ENCODE measurements at regions of chr3 and their contacts with region 1.

Region 1: DNA sequence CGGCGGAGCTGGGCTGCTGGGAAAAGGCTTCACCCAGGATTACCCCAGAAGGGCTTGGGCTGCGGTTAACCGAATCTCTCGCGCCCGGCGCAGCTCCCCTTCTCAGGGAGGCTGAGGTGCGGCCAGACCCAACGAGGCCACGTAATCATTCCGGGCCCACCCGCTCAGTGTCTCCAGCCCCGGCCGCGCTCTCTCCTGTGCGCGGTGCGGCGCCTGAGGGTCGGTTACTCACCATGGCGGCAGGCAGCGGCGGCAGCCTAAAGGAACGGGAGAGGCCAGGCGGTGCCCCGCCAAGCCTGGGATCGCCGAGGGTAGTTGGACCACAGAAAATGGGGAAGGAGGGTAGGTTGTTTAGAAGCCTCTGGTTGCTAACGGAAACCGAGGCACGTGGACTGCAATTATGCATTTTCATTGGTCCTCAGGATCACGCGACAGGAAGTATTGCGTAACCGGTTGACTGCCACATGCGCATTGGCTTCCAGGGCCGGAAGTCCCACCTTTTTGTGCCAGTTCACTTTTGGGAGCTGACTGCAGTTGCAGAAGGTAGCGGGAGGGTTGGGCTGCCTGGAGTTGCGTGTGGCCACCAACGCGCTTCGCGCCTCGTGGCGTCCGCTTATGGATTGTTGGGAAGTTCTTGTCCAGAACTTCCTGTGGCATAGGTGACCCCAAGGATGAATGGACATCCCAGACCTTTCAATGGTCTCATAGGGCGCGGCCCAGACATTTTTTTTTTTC is at the start of gene LZTFL1:
- DNase-seq: peak; percentile 96
- H3K4me3 ChIP-seq: peak within 1 kb of the TSS; percentile 67 to 78 (median 77)
- H3K27ac ChIP-seq: peak within 1 kb of the TSS; percentile 68
- H3K4me1 ChIP-seq: peaks cover 7% of the 10 kb centered on the region
- H3K27me3 ChIP-seq: no peaks in the 10 kb centered on the region
- CTCF ChIP-seq: no peak
- total RNA-seq, gene LZTFL1: 13.1 to 13.7 TPM

Region 2: GRCh38 chr3:45760878-45761711 is 80.8 kb before region 1 on chr3:
- CTCF ChIA-PET with region 1: no interaction called
- dilution Hi-C with region 1: no loop called
- in situ Hi-C with region 1: loop called (anchors 5 to 10 kb)
- intact Hi-C with region 1: no loop called
- DNase-seq: peak; percentile 26
- H3K4me3 ChIP-seq: no peak overlapping the region
- H3K27ac ChIP-seq: no peak overlapping the region
- H3K4me1 ChIP-seq: no peaks in the 10 kb centered on the region
- H3K27me3 ChIP-seq: no peaks in the 10 kb centered on the region
- CTCF ChIP-seq: peak; percentile 81 to 90

Region 3: DNA sequence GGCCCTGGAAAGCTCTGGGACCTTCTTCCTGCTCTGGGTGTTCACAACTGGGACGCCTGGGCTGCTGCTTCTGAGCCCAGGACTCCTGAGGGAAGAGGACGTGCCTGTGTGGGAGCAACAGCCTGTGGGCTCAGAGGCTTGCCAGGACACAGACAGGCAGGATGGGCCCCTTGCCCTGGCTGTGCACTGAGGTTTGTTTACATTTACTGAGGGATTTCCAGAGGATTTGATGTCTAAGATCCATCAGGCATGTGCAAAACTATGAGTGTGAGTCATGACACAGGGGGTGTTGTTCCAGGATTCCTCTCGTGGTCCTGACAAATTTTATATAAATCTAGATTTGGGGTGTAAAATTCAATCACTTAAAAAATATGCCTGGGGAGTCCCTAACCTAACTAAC is 55.0 kb after region 1 on chr3:
- CTCF ChIA-PET with region 1: no interaction called
- dilution Hi-C with region 1: no loop called
- in situ Hi-C with region 1: no loop called
- intact Hi-C with region 1: loop called (anchors 5 kb)
- DNase-seq: peak; percentile 57
- H3K4me3 ChIP-seq: no peak overlapping the region
- H3K27ac ChIP-seq: no peak overlapping the region
- H3K4me1 ChIP-seq: peaks cover 25% of the 10 kb centered on the region
- H3K27me3 ChIP-seq: no peaks in the 10 kb centered on the region
- CTCF ChIP-seq: no peak

Region 4: DNA sequence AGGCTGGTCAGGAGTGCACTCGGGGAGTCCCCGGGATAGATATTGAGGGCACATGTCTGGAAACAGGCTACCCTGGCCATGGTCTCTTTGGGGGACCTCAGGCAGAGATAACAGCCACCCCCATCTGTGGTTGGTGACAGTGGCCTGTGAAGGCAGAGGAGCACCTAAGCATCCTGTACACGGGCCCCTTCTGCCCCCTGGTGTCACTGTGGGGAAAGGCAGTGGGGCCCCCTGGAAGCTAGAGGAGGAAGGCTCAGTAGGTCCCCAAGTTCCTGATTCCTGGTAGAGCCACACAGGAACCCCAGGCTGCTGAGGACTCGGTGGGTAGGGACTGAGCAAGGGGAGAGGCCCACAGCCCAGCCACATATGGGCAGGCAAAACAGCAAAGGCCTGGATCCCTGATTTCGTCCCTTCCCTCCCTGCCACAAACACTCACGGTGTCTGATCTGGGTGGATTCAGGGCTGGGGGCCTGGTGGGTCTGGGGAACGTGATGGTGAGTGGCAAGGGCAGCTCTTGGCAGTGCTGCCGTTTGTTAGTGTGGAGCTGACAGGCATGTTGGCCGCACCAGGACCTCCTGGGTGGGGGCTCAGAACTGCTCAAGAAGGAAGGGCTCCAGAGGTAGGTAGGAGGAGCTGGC is 87.2 kb after region 1 on chr3:
- CTCF ChIA-PET with region 1: no interaction called
- dilution Hi-C with region 1: no loop called
- in situ Hi-C with region 1: no loop called
- intact Hi-C with region 1: loop called (anchors 1 kb)
- DNase-seq: no peak
- H3K4me3 ChIP-seq: no peak overlapping the region
- H3K27ac ChIP-seq: no peak overlapping the region
- H3K4me1 ChIP-seq: peaks cover 1% of the 10 kb centered on the region
- H3K27me3 ChIP-seq: no peaks in the 10 kb centered on the region
- CTCF ChIP-seq: peak; percentile 76 to 87

Measured in mammary epithelial cell (primary cell).